CD4-positive, alpha-beta memory T cell (primary cell): ENCODE measurements at regions of chr5 and their contacts with region 1.

Region 1: DNA sequence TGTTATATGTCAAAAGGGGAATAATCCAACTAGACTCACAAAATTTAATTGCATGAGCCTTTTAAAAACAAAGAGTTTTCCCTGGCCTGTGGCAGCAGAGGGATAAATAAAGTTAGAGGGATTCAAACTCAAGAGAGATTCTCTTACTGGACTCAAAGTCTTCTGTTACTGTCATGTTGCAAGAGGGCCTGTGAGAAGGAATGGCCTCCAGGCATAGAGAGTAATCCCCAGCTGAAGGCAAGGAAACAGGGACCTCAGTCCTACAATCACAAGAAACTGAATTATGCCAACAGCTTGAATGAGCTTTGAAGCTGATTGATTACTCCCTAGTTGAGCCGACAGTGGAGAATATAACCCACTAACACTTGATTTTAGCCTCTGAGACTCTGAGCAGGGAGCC is 16.0 kb upstream of the FEM1C start:
- DNase-seq: no peak
- H3K4me3 ChIP-seq: no peak overlapping the region
- H3K4me3 Mint-ChIP-seq: no peak overlapping the region
- H3K27ac ChIP-seq: no peak overlapping the region
- H3K27ac Mint-ChIP-seq: no peak overlapping the region
- H3K4me1 ChIP-seq: no peaks in the 10 kb centered on the region
- H3K4me1 Mint-ChIP-seq: peaks cover 0 to 1% (median 0%) of the 10 kb centered on the region in 4 donors
- H3K27me3 ChIP-seq: no peaks in the 10 kb centered on the region
- H3K27me3 Mint-ChIP-seq: peaks cover 14 to 20% of the 10 kb centered on the region in 2 donors

Region 2: GRCh38 chr5:115579747-115580173 is 19.2 kb after region 1 on chr5:
- CTCF ChIA-PET with region 1: interaction called, 10 read pairs
- POLR2A ChIA-PET with region 1: no interaction called
- intact Hi-C with region 1: no loop called
- DNase-seq: no peak
- H3K4me3 ChIP-seq: no peak overlapping the region
- H3K4me3 Mint-ChIP-seq: no peak overlapping the region
- H3K27ac ChIP-seq: no peak overlapping the region
- H3K27ac Mint-ChIP-seq: no peak overlapping the region
- H3K4me1 ChIP-seq: no peaks in the 10 kb centered on the region
- H3K4me1 Mint-ChIP-seq: no peaks in the 10 kb centered on the region
- H3K27me3 ChIP-seq: no peaks in the 10 kb centered on the region
- H3K27me3 Mint-ChIP-seq: no peaks in the 10 kb centered on the region

Region 3: GRCh38 chr5:115641948-115642347 is 81.4 kb after region 1 on chr5:
- CTCF ChIA-PET with region 1: no interaction called
- POLR2A ChIA-PET with region 1: no interaction called
- intact Hi-C with region 1: no loop called
- DNase-seq: no peak
- H3K4me3 ChIP-seq: no peak overlapping the region
- H3K4me3 Mint-ChIP-seq: no peak overlapping the region
- H3K27ac ChIP-seq: no peak overlapping the region
- H3K27ac Mint-ChIP-seq: no peak overlapping the region
- H3K4me1 ChIP-seq: no peaks in the 10 kb centered on the region
- H3K4me1 Mint-ChIP-seq: no peaks in the 10 kb centered on the region
- H3K27me3 ChIP-seq: no peaks in the 10 kb centered on the region
- H3K27me3 Mint-ChIP-seq: peaks cover 7 to 21% of the 10 kb centered on the region in 2 donors

Region 4: GRCh38 chr5:115869256-115869655 is 308.7 kb after region 1 on chr5:
- CTCF ChIA-PET with region 1: no interaction called
- POLR2A ChIA-PET with region 1: no interaction called
- intact Hi-C with region 1: no loop called
- DNase-seq: no peak
- H3K4me3 ChIP-seq: no peak overlapping the region
- H3K4me3 Mint-ChIP-seq: no peak overlapping the region
- H3K27ac ChIP-seq: no peak overlapping the region
- H3K27ac Mint-ChIP-seq: no peak overlapping the region
- H3K4me1 ChIP-seq: no peaks in the 10 kb centered on the region
- H3K4me1 Mint-ChIP-seq: peaks cover 0 to 10% (median 5%) of the 10 kb centered on the region in 4 donors
- H3K27me3 ChIP-seq: no peaks in the 10 kb centered on the region
- H3K27me3 Mint-ChIP-seq: no peaks in the 10 kb centered on the region